IMR-90 (cell line): ENCODE measurements at regions of chr4 and their contacts with region 1.

Region 1: DNA sequence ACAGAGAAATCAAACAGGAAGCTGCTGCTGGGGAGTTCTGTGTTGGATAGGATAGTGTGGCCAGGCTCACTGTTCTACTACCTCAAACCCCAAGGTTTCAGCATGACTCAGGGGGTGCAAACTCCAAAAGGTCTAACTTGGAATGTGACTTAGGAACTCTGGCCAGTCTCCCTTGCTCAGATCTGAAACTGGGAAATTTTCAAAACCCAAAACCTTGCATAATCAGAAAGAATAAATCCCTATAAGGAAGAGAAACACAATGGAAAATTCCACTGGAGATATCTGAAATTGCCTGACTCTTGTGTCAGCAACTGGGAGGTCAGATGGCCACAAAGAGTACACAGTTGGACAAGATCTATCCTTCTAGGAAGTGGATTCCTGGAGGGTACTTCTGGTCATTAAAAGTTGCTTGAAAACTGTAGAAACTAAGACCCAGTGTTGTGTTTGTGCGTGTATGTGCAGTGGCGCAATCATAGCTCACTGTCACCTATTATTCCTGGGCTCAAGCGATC is 58.0 kb downstream of the PPEF2 start:
- DNase-seq: peak; percentile 96
- ATAC-seq: peak; percentile 91
- H3K4me3 ChIP-seq: no peak overlapping the region
- H3K27ac ChIP-seq: peak overlapping the region; percentile 94
- H3K4me1 ChIP-seq: peaks cover 12% of the 10 kb centered on the region
- H3K27me3 ChIP-seq: no peaks in the 10 kb centered on the region
- CTCF ChIP-seq: no peak
- POLR2A ChIP-seq: no peak
- RAD21 ChIP-seq: no peak

Region 2: DNA sequence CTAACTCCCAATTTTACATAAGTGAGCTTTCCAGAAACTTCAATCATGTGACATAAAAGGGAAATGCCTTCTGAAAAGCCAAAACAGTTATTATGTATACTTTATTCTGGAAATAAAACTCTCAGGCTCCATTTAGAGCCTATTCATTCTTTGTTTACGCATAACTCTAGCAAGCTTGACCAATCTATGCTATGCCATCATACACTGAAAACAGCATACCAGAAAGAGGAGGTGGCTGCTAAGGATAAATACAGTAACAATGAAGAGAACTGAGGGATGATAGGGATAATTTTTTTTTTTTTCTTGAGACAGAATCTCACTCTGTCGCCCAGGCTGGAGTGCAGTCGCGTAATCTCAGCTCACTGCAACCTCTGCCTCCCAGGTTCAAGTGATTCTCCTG is 238.3 kb before region 1 on chr4:
- CTCF ChIA-PET with region 1: interaction called, 10 read pairs
- POLR2A ChIA-PET with region 1: no interaction called
- dilution Hi-C with region 1: no loop called
- in situ Hi-C with region 1: no loop called
- intact Hi-C with region 1: no loop called
- DNase-seq: peak; percentile 47
- ATAC-seq: peak; percentile 97
- H3K4me3 ChIP-seq: no peak overlapping the region
- H3K27ac ChIP-seq: no peak overlapping the region
- H3K4me1 ChIP-seq: no peaks in the 10 kb centered on the region
- H3K27me3 ChIP-seq: no peaks in the 10 kb centered on the region
- CTCF ChIP-seq: no peak
- POLR2A ChIP-seq: no peak
- RAD21 ChIP-seq: no peak

Region 3: GRCh38 chr4:75940692-75941253 is 96.6 kb after region 1 on chr4 and contains the start of gene NAAA:
- CTCF ChIA-PET with region 1: no interaction called
- POLR2A ChIA-PET with region 1: no interaction called
- dilution Hi-C with region 1: no loop called
- in situ Hi-C with region 1: no loop called
- intact Hi-C with region 1: no loop called
- DNase-seq: peak; percentile 65
- ATAC-seq: peak; percentile 92
- H3K4me3 ChIP-seq: peak within 1 kb of the TSS; percentile 53
- H3K27ac ChIP-seq: peak within 1 kb of the TSS; percentile 22
- H3K4me1 ChIP-seq: no peaks in the 10 kb centered on the region
- H3K27me3 ChIP-seq: no peaks in the 10 kb centered on the region
- CTCF ChIP-seq: peak; percentile 43
- POLR2A ChIP-seq: no peak
- RAD21 ChIP-seq: no peak; the same call in 1 of the 2 replicates
- total RNA-seq, gene NAAA: 15.8 and 17.6 TPM in 2 replicates